ENCODE measurements at regions of chr20 and their contacts with region 1.

Region 1: DNA sequence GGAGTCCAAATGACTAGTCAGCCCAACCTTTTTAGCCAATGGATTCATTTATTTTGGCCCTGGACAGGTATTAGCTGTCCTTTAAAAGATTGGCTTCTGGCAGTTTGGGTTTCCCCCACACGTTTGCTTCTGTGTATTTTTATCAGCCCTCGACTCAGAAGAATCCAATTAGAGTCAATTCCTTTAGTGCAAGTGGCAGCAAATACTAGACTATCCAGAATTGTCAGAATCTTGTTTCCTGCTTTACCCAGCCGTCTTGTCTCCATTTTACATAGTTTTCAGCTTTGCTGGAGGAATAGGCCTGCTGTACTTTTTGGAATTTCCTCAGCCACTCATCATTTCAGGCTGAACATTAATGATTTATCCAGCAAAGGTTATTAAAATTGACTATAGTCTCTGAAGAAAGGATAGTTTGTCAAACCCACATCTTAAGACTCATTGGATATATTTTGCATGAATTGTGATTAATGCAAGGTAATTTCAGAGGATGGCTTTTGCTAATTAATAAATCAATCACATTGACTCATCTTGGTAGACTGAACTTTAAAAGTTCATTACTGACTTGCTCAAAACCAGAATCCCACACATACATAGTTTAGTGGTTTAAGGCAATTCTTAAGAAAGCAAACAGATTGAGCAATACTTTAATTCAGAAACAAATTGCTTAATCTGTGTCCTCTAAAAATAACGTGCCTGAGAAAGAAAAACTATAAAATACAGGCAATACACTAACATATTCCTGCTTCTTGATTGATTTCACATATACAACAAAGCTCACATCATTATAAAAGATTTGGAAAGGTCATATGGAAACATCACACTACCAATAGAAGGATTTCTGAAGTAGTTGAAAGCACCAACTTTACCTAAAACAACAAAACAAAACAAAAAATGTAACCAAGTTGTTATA is 62.9 kb upstream of the ZNF217 start:
- DNase-seq: peak; percentile 76
- ATAC-seq: peak; percentile 44; the same call in 1 of the 2 replicates
- H3K4me3 ChIP-seq: no peak overlapping the region
- H3K27ac ChIP-seq: peak overlapping the region; percentile 50; the same call in 1 of the 2 replicates
- H3K4me1 ChIP-seq: peaks cover 30% of the 10 kb centered on the region
- H3K27me3 ChIP-seq: no peaks in the 10 kb centered on the region
- CTCF ChIP-seq: no peak
- POLR2A ChIP-seq: no peak
- RAD21 ChIP-seq: no peak

Region 2: DNA sequence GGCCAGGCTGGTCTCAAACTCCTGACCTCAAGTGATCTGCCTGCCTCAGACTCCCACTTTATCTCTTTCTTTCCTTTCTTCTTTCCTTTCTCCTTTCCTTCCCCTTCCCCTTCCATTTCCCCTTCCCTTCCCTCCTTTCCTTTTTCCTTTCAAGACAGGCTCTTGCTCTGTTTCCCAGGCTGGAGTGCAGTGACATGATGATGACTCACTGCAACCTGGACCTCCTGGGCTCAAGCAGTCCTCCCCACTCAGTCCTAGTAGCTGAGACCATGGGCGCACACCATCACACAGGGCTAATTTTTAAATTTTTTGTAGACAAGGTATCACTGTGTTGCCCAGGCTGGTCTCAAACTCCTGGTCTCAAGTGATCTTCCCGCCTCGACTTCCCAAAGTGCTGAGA is 1087.3 kb before region 1 on chr20:
- CTCF ChIA-PET with region 1: no interaction called
- POLR2A ChIA-PET with region 1: no interaction called
- dilution Hi-C with region 1: no loop called
- in situ Hi-C with region 1: no loop called
- intact Hi-C with region 1: no loop called
- DNase-seq: no peak
- ATAC-seq: no peak
- H3K4me3 ChIP-seq: no peak overlapping the region
- H3K27ac ChIP-seq: no peak overlapping the region
- H3K4me1 ChIP-seq: no peaks in the 10 kb centered on the region
- H3K27me3 ChIP-seq: no peaks in the 10 kb centered on the region
- CTCF ChIP-seq: no peak
- POLR2A ChIP-seq: no peak
- RAD21 ChIP-seq: no peak

Region 3: DNA sequence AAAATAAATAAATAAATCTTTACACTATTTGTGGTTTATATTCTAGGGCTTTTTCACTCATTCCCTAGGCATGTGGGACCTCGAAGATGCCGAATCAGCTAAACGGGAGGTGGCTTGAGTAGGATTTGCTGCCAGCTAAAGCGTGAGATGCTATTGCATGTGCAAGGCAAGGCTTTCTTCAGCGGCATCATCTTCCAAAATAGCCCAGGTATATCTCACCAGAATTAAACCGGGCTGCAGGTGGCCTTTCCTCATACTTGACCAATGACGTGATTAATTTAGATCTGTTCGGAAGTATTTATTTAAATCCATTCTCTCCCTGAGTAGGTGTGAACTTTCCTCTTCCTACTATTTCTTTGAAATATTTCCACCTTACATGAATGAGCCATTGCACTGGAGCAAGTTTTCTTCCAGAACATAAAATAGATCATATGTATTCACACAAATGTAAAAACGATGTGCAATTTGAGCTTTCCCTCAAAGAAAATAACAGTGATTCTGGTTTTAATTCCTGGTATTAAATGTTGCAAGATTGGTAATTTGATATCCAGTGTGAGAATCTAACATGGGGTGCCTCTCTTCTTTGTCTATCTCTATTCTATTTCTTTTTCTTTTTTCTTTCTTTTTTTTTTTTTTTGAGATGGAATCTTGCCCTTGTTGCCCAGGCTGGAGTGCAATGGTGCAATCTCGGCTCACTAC is 38.6 kb before region 1 on chr20:
- CTCF ChIA-PET with region 1: no interaction called
- POLR2A ChIA-PET with region 1: no interaction called
- dilution Hi-C with region 1: no loop called
- in situ Hi-C with region 1: no loop called
- intact Hi-C with region 1: loop called (anchors 1 kb)
- DNase-seq: no peak
- ATAC-seq: no peak
- H3K4me3 ChIP-seq: no peak overlapping the region
- H3K27ac ChIP-seq: no peak overlapping the region
- H3K4me1 ChIP-seq: peaks cover 15% of the 10 kb centered on the region
- H3K27me3 ChIP-seq: no peaks in the 10 kb centered on the region
- CTCF ChIP-seq: no peak
- POLR2A ChIP-seq: no peak
- RAD21 ChIP-seq: no peak